ENCODE measurements at regions of chr1 and their contacts with region 1.

Region 1: DNA sequence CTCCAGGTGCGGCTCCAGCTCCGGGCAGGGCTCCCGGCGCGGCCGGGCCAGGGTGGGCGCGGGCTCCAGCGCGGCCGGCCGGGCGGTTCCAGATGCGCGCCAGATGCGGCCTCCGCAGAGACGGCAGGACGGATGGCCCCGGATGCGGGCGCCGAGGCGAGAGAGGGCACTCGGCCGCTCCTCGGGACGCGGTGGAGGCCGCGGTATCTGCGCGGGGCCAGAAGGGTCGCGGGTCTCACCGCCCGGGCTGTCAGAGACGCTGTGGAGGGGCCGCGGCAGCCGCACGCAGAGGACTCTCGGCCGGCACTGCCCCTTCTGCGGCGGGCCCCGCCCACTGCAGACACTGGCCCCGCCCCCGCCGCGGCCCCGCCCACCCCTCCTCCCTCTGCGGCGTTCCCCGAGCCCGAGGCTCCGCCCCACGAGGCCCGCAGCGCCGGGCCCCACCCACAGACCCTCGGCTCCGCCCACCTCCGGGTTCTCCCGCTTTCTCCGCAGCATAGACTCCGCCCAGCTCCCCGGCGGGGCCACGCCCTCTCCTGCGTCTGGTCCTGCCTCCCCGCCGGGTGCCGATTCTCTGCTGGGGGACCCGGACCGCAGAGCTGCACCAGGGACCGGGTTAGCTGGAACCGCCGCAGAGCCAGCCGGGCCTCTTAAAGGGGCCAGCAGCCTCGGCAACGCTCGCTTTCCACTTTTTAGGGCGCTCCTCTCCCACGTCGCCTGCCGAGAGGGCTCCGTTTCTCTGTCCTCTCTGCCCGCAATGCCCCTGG is at the start of gene IFFO2:
- DNase-seq: peak; percentile 98 to 100
- ATAC-seq: peak; percentile 97 to 99 (median 98)
- H3K4me3 ChIP-seq: peak within 1 kb of the TSS; percentile 64 to 90 (median 84)
- H3K27ac ChIP-seq: peak within 1 kb of the TSS; percentile 42 to 85 (median 76)
- H3K4me1 ChIP-seq: peaks cover 1 to 47% (median 31%) of the 10 kb centered on the region in 9 donors
- H3K27me3 ChIP-seq: peaks cover 0 to 26% (median 0%) of the 10 kb centered on the region in 7 donors
- CTCF ChIP-seq: no peak
- total RNA-seq, gene IFFO2: 3.2 to 8.2 (median 4.7) TPM

Region 2: GRCh38 chr1:18913065-18913835 is 43.3 kb before region 1 on chr1:
- intact Hi-C with region 1: loop called in 7 of 10 experiments (anchors 5 to 10 kb)
- DNase-seq: peak; percentile 85 to 89
- ATAC-seq: peak; percentile 86 to 95 (median 90)
- H3K4me3 ChIP-seq: no peak overlapping the region
- H3K27ac ChIP-seq: peak overlapping the region; percentile 18 to 86 (median 76)
- H3K4me1 ChIP-seq: peaks cover 4 to 45% (median 31%) of the 10 kb centered on the region in 9 donors
- H3K27me3 ChIP-seq: no peaks in the 10 kb centered on the region
- CTCF ChIP-seq: peak; percentile 93 to 100 (median 98)

Region 3: GRCh38 chr1:18919197-18919905 is 37.2 kb before region 1 on chr1:
- intact Hi-C with region 1: loop called in 8 of 10 experiments (anchors 2 to 5 kb)
- DNase-seq: no peak
- ATAC-seq: no peak
- H3K4me3 ChIP-seq: no peak overlapping the region
- H3K27ac ChIP-seq: no peak overlapping the region
- H3K4me1 ChIP-seq: peaks cover 22 to 49% (median 43%) of the 10 kb centered on the region in 9 donors
- H3K27me3 ChIP-seq: no peaks in the 10 kb centered on the region
- CTCF ChIP-seq: no peak

Region 4: GRCh38 chr1:18926315-18927081 is 30.1 kb before region 1 on chr1:
- intact Hi-C with region 1: loop called in 5 of 10 experiments (anchors 2 to 5 kb)
- DNase-seq: peak in 1 of 2 donors; percentile 85
- ATAC-seq: peak; percentile 40 to 76 (median 68)
- H3K4me3 ChIP-seq: peak overlapping the region in 5 of 10 donors; percentile 12 to 39 (median 17)
- H3K27ac ChIP-seq: peak overlapping the region; percentile 81 to 97 (median 90)
- H3K4me1 ChIP-seq: peaks cover 48 to 89% (median 64%) of the 10 kb centered on the region in 9 donors
- H3K27me3 ChIP-seq: no peaks in the 10 kb centered on the region
- CTCF ChIP-seq: peak in 4 of 9 donors; percentile 7 to 26 (median 18)

Region 5: DNA sequence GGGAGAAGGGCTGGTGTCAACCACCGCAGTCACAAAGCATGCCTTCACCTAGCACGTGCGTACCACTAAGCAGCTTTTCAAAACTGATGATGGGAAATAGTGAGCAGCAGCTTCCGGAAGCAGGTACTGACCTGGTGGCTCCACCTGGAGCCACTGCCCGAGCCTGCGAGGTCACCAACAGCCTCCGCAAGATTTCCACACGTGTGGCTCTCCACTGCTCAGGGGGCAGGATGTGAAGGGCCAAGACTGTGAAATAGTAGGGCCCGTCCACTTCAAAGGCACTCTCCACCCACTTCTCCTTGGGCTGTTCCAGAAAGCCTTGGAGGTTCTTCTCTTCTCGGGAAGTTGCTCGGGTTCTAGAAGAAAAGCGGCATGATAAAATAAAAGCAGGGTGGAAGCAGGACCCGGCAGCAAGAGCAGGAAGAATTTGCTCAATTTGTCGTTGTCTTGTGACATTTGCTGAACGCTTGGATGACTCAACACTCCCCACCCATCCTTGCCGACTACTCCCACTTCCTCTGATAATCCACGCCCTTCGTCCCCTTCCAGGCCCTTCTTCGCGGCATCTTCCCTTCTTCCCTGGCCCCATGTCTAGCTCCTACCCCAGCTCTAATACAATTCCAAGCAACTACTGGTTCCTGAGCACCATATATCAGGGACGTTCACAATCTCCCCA is 124.8 kb after region 1 on chr1:
- intact Hi-C with region 1: loop called in 2 of 10 experiments (anchors 5 to 10 kb)
- DNase-seq: peak in 1 of 2 donors; percentile 57
- ATAC-seq: peak in 7 of 8 donors; percentile 42 to 83 (median 62)
- H3K4me3 ChIP-seq: peak overlapping the region in 6 of 10 donors; percentile 8 to 38 (median 30)
- H3K27ac ChIP-seq: peak overlapping the region in 9 of 10 donors; percentile 46 to 85 (median 67)
- H3K4me1 ChIP-seq: peaks cover 4 to 41% (median 10%) of the 10 kb centered on the region in 9 donors
- H3K27me3 ChIP-seq: no peaks in the 10 kb centered on the region
- CTCF ChIP-seq: no peak

Region 6: DNA sequence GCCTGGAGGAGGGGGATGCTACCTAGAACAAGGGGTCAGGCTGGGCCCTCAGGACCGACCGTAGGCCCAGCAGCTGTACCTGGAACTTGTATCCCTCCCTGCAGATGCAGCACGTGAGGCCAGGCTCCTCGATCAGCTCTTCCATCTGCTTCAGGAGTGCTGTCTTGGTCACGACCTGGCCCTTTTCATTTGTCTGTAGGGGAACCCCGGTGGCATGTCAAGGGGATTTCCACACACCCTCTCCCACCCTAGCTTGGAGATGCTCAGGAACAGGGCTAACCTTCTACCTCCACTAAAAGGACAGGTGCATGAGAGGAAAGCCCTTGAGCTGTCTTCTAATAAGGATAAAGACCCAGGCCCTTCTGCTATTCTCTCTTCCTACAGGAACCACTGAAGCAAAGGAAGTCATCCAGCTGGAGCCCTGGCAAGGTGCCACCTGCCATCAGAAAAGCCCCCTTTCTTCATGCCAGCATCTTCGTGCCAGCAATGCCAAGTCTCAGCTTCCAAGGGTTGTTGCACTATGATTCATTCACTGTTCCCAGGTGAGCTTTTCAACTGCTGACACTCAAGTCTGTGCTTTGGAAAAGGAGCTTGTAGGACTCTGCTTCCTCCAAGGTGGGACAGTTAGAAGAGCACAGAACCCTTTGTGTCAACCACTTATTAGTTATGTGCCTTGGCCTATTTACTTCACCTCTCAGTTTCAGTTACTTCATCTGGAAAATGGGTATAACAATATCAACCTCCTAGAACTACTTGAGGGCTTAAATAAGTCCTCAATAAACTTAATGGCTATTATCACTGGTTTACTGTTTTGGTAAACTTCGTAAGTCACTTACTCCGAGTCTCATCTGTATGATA is 131.4 kb after region 1 on chr1:
- intact Hi-C with region 1: loop called in 2 of 10 experiments (anchors 5 kb)
- DNase-seq: no peak
- ATAC-seq: no peak
- H3K4me3 ChIP-seq: no peak overlapping the region
- H3K27ac ChIP-seq: no peak overlapping the region
- H3K4me1 ChIP-seq: peaks cover 0 to 31% (median 11%) of the 10 kb centered on the region in 9 donors
- H3K27me3 ChIP-seq: no peaks in the 10 kb centered on the region
- CTCF ChIP-seq: no peak